K562 (cell line): ENCODE measurements at regions of chr11 and their contacts with region 1.

Region 1: GRCh38 chr11:2305140-2305840 is 3.5 kb downstream of the TSPAN32 start:
- DNase-seq: peak; percentile 66 to 88 (median 70)
- ATAC-seq: peak; percentile 81
- H3K4me3 ChIP-seq: peak overlapping the region; percentile 5; the same call in 1 of the 2 replicates
- H3K27ac ChIP-seq: peak overlapping the region; percentile 47; the same call in 2 of the 3 replicates
- H3K4me1 ChIP-seq: peaks cover 59 to 92% of the 10 kb centered on the region in 2 experiments
- H3K27me3 ChIP-seq: no peaks in the 10 kb centered on the region; a peak in 1 of 5 replicates
- CTCF ChIP-seq: peak; percentile 89 to 91 (median 91)
- EP300 ChIP-seq: no peak
- POLR2A ChIP-seq: no peak
- RAD21 ChIP-seq: peak; percentile 56 to 85

Region 2: DNA sequence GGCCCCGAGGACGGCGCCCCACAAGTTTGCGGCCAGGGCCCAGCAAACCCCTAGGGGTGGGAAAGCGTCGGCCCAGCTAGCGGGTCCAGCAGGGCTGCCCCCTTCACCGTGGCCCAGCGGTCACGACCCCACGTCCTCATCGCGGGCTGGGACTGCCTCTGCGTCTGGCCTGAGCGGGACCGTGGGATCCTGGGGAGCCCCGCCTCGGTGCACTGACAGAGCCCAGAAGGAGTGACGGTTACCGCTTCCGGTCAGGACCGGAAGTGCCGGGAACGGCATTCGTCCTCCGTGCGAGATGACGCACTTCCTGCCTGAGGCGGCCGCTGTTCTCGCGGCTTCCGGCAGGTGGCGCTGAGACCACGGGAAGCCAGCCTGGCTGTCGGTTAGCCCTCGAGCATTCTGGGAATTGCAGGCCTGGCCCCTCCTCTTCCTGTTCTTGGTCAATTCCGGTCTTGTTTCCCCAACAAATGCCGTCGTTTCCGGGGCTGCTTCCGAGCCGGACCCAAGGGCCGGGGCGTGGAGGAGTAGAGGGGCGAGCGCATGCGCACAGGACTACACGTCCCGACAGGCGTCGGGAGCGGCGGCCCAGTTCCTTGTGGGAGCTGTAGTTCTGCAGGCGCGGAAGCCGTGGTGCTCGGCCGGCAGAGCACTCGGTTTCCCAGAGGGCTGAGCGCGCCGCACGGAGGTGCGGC is 94.9 kb after region 1 on chr11 and contains the start of gene TSSC4:
- CTCF ChIA-PET with region 1: interaction called, 6 read pairs
- POLR2A ChIA-PET with region 1: interaction called, 6 read pairs
- in situ Hi-C with region 1: no loop called
- intact Hi-C with region 1: loop called (anchors 5 kb)
- DNase-seq: peak; percentile 93 to 99 (median 98)
- ATAC-seq: peak; percentile 91
- H3K4me3 ChIP-seq: peak within 1 kb of the TSS; percentile 87
- H3K27ac ChIP-seq: peak within 1 kb of the TSS; percentile 77
- H3K4me1 ChIP-seq: peaks cover 12 to 73% of the 10 kb centered on the region in 2 experiments; a peak in 4 of 5 replicates
- H3K27me3 ChIP-seq: no peaks in the 10 kb centered on the region
- CTCF ChIP-seq: peak; percentile 95 to 99 (median 99)
- EP300 ChIP-seq: peak; percentile 91
- POLR2A ChIP-seq: peak; percentile 92
- RAD21 ChIP-seq: peak; percentile 71 to 72
- polyA plus RNA-seq, gene TSSC4: 0.41 to 2.8 TPM